ENCODE measurements at regions of chr6 and their contacts with region 1.

Region 1: DNA sequence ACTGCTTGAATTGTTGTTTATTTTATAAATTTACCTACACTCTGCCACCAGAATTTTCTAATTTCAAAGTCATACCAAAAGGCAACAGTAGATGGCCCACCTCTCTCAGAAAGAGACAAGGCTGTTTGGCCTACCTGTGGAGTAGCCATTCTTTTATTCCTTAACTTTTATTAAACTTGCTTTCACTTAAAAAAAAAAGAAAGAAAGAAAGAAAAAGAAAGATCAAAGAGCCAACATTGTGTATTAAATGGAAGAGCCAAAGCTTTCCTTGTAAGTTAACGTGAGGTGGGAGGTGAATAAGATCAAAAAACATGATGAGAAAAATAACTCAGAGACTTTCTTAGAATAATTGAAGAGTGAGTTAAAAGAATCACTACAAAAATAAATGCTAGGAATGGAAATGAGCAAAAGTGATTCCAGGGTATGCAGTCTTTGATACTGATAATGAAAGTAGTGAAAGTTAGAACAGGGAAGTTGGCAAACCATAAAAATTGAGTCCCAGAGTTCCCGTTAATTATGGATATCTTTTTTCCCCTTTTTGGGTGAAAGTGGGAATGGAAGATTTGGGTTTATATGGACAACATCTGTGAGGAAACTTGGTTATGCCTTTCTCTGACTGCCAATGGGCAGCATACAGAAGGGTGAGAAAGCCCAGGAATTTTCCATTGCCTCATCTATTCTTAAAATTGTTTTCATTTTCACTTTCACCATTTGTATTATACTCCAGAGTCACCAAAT is 35.9 kb upstream of the MYB start:
- DNase-seq: peak; percentile 56
- H3K4me3 ChIP-seq: no peak overlapping the region
- H3K27ac ChIP-seq: no peak overlapping the region
- H3K4me1 ChIP-seq: peaks cover 13% of the 10 kb centered on the region
- H3K27me3 ChIP-seq: no peaks in the 10 kb centered on the region
- CTCF ChIP-seq: peak; percentile 79

Region 2: GRCh38 chr6:133764008-133764753 is 1381.1 kb before region 1 on chr6:
- CTCF ChIA-PET with region 1: no interaction called
- POLR2A ChIA-PET with region 1: no interaction called
- intact Hi-C with region 1: no loop called
- DNase-seq: no peak
- H3K4me3 ChIP-seq: no peak overlapping the region
- H3K27ac ChIP-seq: no peak overlapping the region
- H3K4me1 ChIP-seq: no peaks in the 10 kb centered on the region
- H3K27me3 ChIP-seq: peaks cover 68% of the 10 kb centered on the region
- CTCF ChIP-seq: no peak

Region 3: GRCh38 chr6:135423649-135424128 is 278.5 kb after region 1 on chr6:
- CTCF ChIA-PET with region 1: interaction called, 6 read pairs
- POLR2A ChIA-PET with region 1: no interaction called
- intact Hi-C with region 1: loop called (anchors 2 kb)
- DNase-seq: peak; percentile 72
- H3K4me3 ChIP-seq: no peak overlapping the region
- H3K27ac ChIP-seq: no peak overlapping the region
- H3K4me1 ChIP-seq: peaks cover 20% of the 10 kb centered on the region
- H3K27me3 ChIP-seq: no peaks in the 10 kb centered on the region
- CTCF ChIP-seq: peak; percentile 75

Region 4: GRCh38 chr6:135438907-135439535 is 293.8 kb after region 1 on chr6:
- CTCF ChIA-PET with region 1: interaction called, 9 read pairs
- POLR2A ChIA-PET with region 1: no interaction called
- intact Hi-C with region 1: loop called (anchors 1 kb)
- DNase-seq: peak; percentile 58
- H3K4me3 ChIP-seq: no peak overlapping the region
- H3K27ac ChIP-seq: no peak overlapping the region
- H3K4me1 ChIP-seq: no peaks in the 10 kb centered on the region
- H3K27me3 ChIP-seq: no peaks in the 10 kb centered on the region
- CTCF ChIP-seq: peak; percentile 64

Measured in A673 (cell line).